CD4-positive, alpha-beta T cell (primary cell): ENCODE measurements at regions of chr5 and their contacts with region 1.

Region 1: DNA sequence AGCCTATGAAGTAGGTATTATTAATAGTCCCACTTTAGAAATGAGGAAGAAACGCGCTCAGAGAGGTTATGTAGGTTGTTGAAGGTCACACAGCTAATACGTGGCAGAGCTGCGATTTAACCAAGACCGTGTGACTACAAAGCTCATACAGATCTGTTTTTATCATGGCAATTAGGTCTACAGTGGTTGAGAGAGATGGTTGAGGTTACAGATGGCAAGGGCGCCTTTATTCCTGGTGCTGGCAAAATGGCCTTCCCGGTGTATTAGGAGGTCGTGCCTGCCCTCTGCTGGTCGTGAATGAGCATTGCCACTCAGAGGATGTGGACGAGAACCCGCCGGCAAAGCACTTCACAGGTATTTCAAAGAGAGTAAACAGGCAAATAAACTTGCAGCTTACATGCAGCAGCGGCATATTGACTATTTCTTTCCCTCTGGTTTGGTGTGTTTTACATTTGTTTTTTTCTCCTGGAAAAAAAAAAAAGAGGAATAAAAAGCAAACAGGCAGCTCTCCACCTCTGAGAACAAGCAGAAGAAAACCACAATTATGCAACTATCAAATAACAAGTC is 65.3 kb upstream of the EGFLAM start:
- DNase-seq: peak; percentile 5 to 62 (median 28)
- ATAC-seq: peak; percentile 52
- H3K4me3 ChIP-seq: no peak overlapping the region
- H3K4me3 Mint-ChIP-seq: no peak overlapping the region
- H3K27ac ChIP-seq: no peak overlapping the region
- H3K27ac Mint-ChIP-seq: no peak overlapping the region
- H3K4me1 ChIP-seq: peaks cover 4% of the 10 kb centered on the region
- H3K4me1 Mint-ChIP-seq: peaks cover 6% of the 10 kb centered on the region
- H3K27me3 ChIP-seq: peaks cover 0 to 5% of the 10 kb centered on the region in 2 experiments
- H3K27me3 Mint-ChIP-seq: peaks cover 53% of the 10 kb centered on the region
- CTCF ChIP-seq: peak; percentile 68

Region 2: DNA sequence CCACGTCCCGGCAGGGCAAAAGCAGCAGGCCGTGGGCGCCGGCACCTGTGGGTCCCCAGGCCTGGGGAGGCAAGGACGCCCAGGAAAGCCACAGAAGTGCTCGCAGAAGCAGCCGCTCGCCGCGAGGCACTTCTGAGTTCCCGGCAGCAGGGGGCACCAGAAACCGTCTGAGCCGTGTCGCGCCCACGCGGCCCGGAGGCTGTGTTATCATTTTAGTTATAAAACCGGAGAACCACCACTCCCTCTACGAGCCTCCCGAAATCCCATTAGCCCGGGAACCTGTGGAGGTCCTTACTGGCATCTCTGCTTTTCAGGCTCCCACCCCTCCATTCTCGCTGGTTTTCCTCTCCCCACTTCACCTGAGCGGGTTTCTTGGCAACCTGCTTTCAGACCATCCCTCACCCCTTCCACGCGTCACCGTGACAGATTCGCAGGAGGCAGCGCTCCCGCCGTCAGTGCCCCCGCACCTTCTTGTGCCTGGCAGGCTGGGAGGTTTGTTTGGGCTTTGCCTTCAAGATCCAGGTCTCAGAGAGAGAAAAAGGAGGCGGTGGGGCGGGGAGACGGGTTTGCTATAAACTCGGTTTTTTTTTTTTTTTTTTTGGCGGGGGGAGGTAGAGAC is 355.6 kb before region 1 on chr5:
- CTCF ChIA-PET with region 1: no interaction called
- POLR2A ChIA-PET with region 1: no interaction called
- intact Hi-C with region 1: loop called in 1 of 2 experiments (anchors 5 kb)
- DNase-seq: peak in 7 of 14 experiments; percentile 2 to 32 (median 24)
- ATAC-seq: no peak
- H3K4me3 ChIP-seq: no peak overlapping the region
- H3K4me3 Mint-ChIP-seq: peak overlapping the region; percentile 30
- H3K27ac ChIP-seq: no peak overlapping the region
- H3K27ac Mint-ChIP-seq: no peak overlapping the region
- H3K4me1 ChIP-seq: peaks cover 24% of the 10 kb centered on the region
- H3K4me1 Mint-ChIP-seq: peaks cover 26% of the 10 kb centered on the region
- H3K27me3 ChIP-seq: peaks cover 62 to 93% of the 10 kb centered on the region in 2 experiments
- H3K27me3 Mint-ChIP-seq: peaks cover 86% of the 10 kb centered on the region
- CTCF ChIP-seq: no peak

Region 3: GRCh38 chr5:38871790-38872551 is 678.9 kb after region 1 on chr5:
- CTCF ChIA-PET with region 1: no interaction called
- POLR2A ChIA-PET with region 1: no interaction called
- intact Hi-C with region 1: no loop called
- DNase-seq: no peak
- ATAC-seq: no peak
- H3K4me3 ChIP-seq: no peak overlapping the region
- H3K4me3 Mint-ChIP-seq: no peak overlapping the region
- H3K27ac ChIP-seq: no peak overlapping the region
- H3K27ac Mint-ChIP-seq: no peak overlapping the region
- H3K4me1 ChIP-seq: no peaks in the 10 kb centered on the region
- H3K4me1 Mint-ChIP-seq: no peaks in the 10 kb centered on the region
- H3K27me3 ChIP-seq: peaks cover 7 to 26% of the 10 kb centered on the region in 2 experiments
- H3K27me3 Mint-ChIP-seq: peaks cover 68% of the 10 kb centered on the region
- CTCF ChIP-seq: no peak